ENCODE measurements at regions of chr18 and their contacts with region 1.

Region 1: GRCh38 chr18:59459369-59460079 is 100.5 kb upstream of the LMAN1 start:
- DNase-seq: no peak
- ATAC-seq: peak in 3 of 4 donors; percentile 10 to 56 (median 47)
- H3K4me3 ChIP-seq: no peak overlapping the region
- H3K27ac ChIP-seq: no peak overlapping the region
- H3K4me1 ChIP-seq: peaks cover 0 to 22% (median 3%) of the 10 kb centered on the region in 12 donors
- H3K27me3 ChIP-seq: peaks cover 0 to 10% (median 0%) of the 10 kb centered on the region in 9 donors
- CTCF ChIP-seq: peak; percentile 46 to 72 (median 64)
- POLR2A ChIP-seq: no peak

Region 2: DNA sequence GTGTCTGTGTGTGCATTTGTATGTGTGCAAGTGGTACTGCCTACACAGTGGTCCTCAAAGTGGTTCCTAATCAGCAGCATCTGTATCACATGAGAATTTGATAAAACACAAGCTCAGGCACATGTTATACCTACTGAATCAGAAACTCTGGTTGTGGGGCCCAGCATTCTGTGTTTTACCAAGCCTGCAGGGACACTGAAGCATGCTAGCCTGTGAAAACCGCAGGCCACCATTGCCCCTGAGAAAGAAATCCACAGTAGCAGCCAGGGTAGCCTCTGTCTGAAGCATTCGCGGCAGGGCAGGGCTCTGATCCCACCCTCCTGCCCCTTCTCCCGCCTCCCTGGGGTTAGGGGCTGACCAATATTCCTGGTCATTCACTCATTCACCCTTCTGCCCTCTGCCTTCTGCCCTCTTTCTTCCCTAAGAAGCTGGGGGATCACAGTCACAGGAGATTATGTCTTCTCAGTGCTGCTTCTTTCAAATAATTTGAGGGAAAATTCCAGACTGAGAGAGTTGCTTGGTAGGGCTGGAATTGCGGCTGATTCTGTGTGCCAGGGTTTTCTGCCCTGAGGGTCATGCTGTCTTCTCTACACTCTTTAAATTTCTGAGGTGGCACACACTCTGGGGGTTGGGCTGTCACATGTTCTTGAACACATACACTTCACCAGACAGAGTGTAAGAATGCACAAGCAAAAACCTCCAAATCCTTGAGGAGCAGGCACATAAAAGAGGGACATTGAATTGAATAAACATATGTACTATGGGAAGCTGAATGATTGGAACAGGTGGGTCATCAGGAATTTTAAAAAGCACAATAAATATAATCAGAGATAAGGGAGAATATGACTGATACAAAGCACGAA is 446.5 kb before region 1 on chr18:
- intact Hi-C with region 1: no loop called
- DNase-seq: no peak
- ATAC-seq: peak in 1 of 4 donors; percentile 27
- H3K4me3 ChIP-seq: no peak overlapping the region
- H3K27ac ChIP-seq: no peak overlapping the region
- H3K4me1 ChIP-seq: peaks cover 0 to 11% (median 2%) of the 10 kb centered on the region in 12 donors
- H3K27me3 ChIP-seq: no peaks in the 10 kb centered on the region
- CTCF ChIP-seq: no peak
- POLR2A ChIP-seq: no peak

Region 3: GRCh38 chr18:59520562-59521355 is 61.2 kb after region 1 on chr18:
- intact Hi-C with region 1: no loop called
- DNase-seq: no peak
- ATAC-seq: no peak
- H3K4me3 ChIP-seq: no peak overlapping the region
- H3K27ac ChIP-seq: peak overlapping the region in 1 of 12 donors; percentile 19
- H3K4me1 ChIP-seq: peaks cover 0 to 18% (median 8%) of the 10 kb centered on the region in 12 donors
- H3K27me3 ChIP-seq: no peaks in the 10 kb centered on the region
- CTCF ChIP-seq: no peak
- POLR2A ChIP-seq: no peak

Region 4: DNA sequence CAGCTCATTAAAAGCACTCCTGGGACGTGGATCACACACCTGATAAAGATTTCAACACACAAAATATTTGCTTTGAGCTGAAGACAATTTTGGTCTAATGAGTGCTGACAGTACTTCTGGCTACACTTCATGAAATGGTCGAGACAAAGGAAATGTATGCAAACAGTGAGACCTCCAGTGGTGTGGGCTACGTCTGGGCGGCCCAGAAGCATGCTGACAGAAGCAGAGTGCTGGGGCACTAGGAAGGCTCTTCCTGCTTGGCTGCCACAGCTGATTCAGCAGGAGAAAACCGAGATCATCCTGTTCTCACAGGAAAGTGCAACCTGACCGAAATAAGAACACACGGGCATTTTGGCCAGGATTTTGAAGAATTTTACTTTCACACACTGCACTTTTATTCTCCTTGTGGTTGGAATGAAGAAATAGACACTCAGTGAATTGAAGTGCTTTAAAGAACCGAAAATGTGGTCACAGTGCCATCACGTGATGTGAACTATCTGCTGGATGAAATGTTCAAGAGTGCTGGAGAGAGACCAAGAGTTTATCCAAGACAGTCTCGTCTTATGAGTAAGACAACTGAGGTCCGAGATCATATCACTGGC is 88.2 kb after region 1 on chr18:
- intact Hi-C with region 1: loop called in 2 of 10 experiments (anchors 10 kb)
- DNase-seq: no peak
- ATAC-seq: peak in 2 of 4 donors; percentile 31 to 37
- H3K4me3 ChIP-seq: no peak overlapping the region
- H3K27ac ChIP-seq: no peak overlapping the region
- H3K4me1 ChIP-seq: peaks cover 0 to 17% (median 3%) of the 10 kb centered on the region in 12 donors
- H3K27me3 ChIP-seq: no peaks in the 10 kb centered on the region
- CTCF ChIP-seq: no peak
- POLR2A ChIP-seq: no peak

Region 5: GRCh38 chr18:59606193-59607077 is 146.9 kb after region 1 on chr18:
- intact Hi-C with region 1: loop called in 4 of 10 experiments (anchors 5 to 10 kb)
- DNase-seq: peak in 2 of 5 donors; percentile 26 to 59
- ATAC-seq: peak; percentile 88 to 94 (median 90)
- H3K4me3 ChIP-seq: no peak overlapping the region
- H3K27ac ChIP-seq: peak overlapping the region in 2 of 12 donors; percentile 9 to 59
- H3K4me1 ChIP-seq: peaks cover 0 to 23% (median 5%) of the 10 kb centered on the region in 12 donors
- H3K27me3 ChIP-seq: no peaks in the 10 kb centered on the region
- CTCF ChIP-seq: no peak
- POLR2A ChIP-seq: no peak

Region 6: GRCh38 chr18:59617468-59617932 is 158.0 kb after region 1 on chr18:
- intact Hi-C with region 1: loop called in 4 of 10 experiments (anchors 5 to 10 kb)
- DNase-seq: no peak
- ATAC-seq: no peak
- H3K4me3 ChIP-seq: no peak overlapping the region
- H3K27ac ChIP-seq: no peak overlapping the region
- H3K4me1 ChIP-seq: no peaks in the 10 kb centered on the region
- H3K27me3 ChIP-seq: no peaks in the 10 kb centered on the region
- CTCF ChIP-seq: no peak
- POLR2A ChIP-seq: no peak

Region 7: GRCh38 chr18:59631583-59632181 is 172.2 kb after region 1 on chr18:
- intact Hi-C with region 1: loop called in 6 of 10 experiments (anchors 2 to 10 kb)
- DNase-seq: no peak
- ATAC-seq: no peak
- H3K4me3 ChIP-seq: no peak overlapping the region
- H3K27ac ChIP-seq: peak overlapping the region in 1 of 12 donors; percentile 80
- H3K4me1 ChIP-seq: peaks cover 0 to 6% (median 0%) of the 10 kb centered on the region in 12 donors
- H3K27me3 ChIP-seq: no peaks in the 10 kb centered on the region
- CTCF ChIP-seq: peak; percentile 36 to 65 (median 48)
- POLR2A ChIP-seq: no peak

Region 8: GRCh38 chr18:59823596-59824195 is 364.2 kb after region 1 on chr18:
- intact Hi-C with region 1: loop called (anchors 1 to 2 kb)
- DNase-seq: peak in 4 of 5 donors; percentile 46 to 62 (median 58)
- ATAC-seq: peak; percentile 32 to 80 (median 74)
- H3K4me3 ChIP-seq: no peak overlapping the region
- H3K27ac ChIP-seq: no peak overlapping the region
- H3K4me1 ChIP-seq: peaks cover 0 to 3% (median 0%) of the 10 kb centered on the region in 12 donors
- H3K27me3 ChIP-seq: peaks cover 0 to 7% (median 0%) of the 10 kb centered on the region in 9 donors
- CTCF ChIP-seq: peak; percentile 63 to 83 (median 76)
- POLR2A ChIP-seq: no peak

Region 9: GRCh38 chr18:61274561-61274960 is 1815.0 kb after region 1 on chr18:
- intact Hi-C with region 1: no loop called
- DNase-seq: no peak
- ATAC-seq: no peak
- H3K4me3 ChIP-seq: no peak overlapping the region
- H3K27ac ChIP-seq: no peak overlapping the region
- H3K4me1 ChIP-seq: no peaks in the 10 kb centered on the region
- H3K27me3 ChIP-seq: no peaks in the 10 kb centered on the region
- CTCF ChIP-seq: no peak
- POLR2A ChIP-seq: no peak

Measured in heart left ventricle (tissue), 16 donors.